Activated CD4-positive, alpha-beta T cell treated with anti-CD3 and anti-CD28 coated beads for 36 hours (primary cell): ENCODE measurements at regions of chr21 and their contacts with region 1.

Region 1: DNA sequence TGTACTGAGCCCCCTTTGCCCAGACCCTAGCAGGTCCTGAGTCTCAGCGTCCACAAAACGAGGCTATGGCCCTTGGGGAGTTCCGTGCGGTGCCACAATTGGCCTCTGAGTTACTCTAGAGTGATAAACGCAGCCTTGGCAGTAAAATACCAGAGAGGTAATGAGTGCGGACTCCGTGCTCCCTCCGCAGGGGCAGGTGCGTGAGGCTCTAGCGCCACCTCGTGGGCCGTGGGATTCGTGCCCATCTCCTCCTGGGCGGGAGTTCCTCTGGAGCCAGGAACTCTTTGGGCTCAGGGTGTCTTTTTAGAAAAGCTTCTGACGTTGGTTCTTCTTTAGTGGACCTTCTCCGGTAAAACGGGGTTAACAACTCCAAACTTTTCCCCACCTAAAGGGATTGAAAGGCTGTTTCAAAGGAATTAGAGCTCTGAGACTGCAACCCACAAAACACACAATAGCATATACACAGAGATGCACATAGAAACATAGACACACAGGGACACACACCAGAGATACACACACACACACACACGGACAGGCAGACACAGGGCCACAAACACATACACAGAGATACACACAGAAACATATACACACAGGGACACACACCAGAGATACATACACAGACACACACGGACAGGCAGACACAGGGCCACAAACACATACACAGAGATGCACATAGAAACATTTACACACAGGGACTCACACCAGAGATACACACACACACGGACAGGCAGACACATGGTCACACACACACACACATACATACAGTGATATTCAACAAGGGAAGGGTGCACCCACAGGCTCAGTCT is 99.4 kb downstream of the KCNJ15 start:
- DNase-seq: peak; percentile 88
- ATAC-seq: peak; percentile 78
- H3K4me3 Mint-ChIP-seq: no peak overlapping the region
- H3K27ac Mint-ChIP-seq: no peak overlapping the region
- H3K4me1 Mint-ChIP-seq: peaks cover 13% of the 10 kb centered on the region
- H3K27me3 Mint-ChIP-seq: peaks cover 5% of the 10 kb centered on the region

Region 2: DNA sequence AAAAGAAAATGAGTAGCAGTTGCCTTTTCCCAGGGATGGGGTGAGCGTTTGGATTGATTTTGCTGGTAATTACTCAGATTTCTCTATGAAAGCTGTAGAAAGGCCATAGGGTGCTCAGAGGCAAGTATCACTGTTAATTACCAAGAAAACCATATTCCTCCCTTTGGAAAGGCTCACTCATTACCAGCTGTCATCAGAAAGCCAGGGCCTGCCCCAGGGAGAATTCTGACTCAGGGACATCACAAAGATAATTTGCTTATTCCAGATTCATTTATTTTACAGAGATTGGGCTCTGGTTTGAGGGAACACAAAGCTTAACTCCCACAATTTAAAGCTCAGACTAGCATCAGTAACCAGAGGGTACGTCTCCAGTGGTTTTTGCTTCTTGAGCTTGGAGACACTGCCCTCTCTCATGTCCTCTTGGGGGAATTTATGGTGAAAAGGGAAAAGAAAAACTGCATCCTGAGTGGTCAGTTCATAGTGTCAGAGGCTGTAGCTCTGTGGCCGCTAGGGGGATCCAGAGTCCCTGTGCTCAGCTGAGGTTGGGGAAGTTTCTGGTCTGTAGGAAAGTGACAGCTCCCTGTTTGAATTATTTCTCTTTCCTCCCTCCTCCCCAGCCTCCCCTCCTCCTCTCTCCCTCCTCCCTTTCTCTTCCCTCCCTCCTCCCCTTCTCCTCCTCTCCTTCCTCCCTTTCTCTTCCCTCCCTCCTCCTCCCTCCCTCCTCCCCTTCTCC is 644.2 kb before region 1 on chr21:
- CTCF ChIA-PET with region 1: interaction called, 4 read pairs
- POLR2A ChIA-PET with region 1: no interaction called
- intact Hi-C with region 1: loop called (anchors 1 to 5 kb)
- DNase-seq: peak; percentile 78
- ATAC-seq: peak; percentile 53
- H3K4me3 Mint-ChIP-seq: no peak overlapping the region
- H3K27ac Mint-ChIP-seq: no peak overlapping the region
- H3K4me1 Mint-ChIP-seq: no peaks in the 10 kb centered on the region
- H3K27me3 Mint-ChIP-seq: peaks cover 14% of the 10 kb centered on the region

Region 3: GRCh38 chr21:38159355-38159754 is 196.8 kb before region 1 on chr21:
- CTCF ChIA-PET with region 1: interaction called, 52 read pairs
- POLR2A ChIA-PET with region 1: no interaction called
- intact Hi-C with region 1: loop called (anchors 1 kb)
- DNase-seq: peak; percentile 78
- ATAC-seq: no peak
- H3K4me3 Mint-ChIP-seq: no peak overlapping the region
- H3K27ac Mint-ChIP-seq: no peak overlapping the region
- H3K4me1 Mint-ChIP-seq: no peaks in the 10 kb centered on the region
- H3K27me3 Mint-ChIP-seq: peaks cover 15% of the 10 kb centered on the region

Region 4: GRCh38 chr21:38205940-38206339 is 150.3 kb before region 1 on chr21:
- CTCF ChIA-PET with region 1: interaction called, 15 read pairs
- POLR2A ChIA-PET with region 1: no interaction called
- intact Hi-C with region 1: no loop called
- DNase-seq: no peak
- ATAC-seq: no peak
- H3K4me3 Mint-ChIP-seq: no peak overlapping the region
- H3K27ac Mint-ChIP-seq: no peak overlapping the region
- H3K4me1 Mint-ChIP-seq: peaks cover 3% of the 10 kb centered on the region
- H3K27me3 Mint-ChIP-seq: peaks cover 18% of the 10 kb centered on the region

Region 5: DNA sequence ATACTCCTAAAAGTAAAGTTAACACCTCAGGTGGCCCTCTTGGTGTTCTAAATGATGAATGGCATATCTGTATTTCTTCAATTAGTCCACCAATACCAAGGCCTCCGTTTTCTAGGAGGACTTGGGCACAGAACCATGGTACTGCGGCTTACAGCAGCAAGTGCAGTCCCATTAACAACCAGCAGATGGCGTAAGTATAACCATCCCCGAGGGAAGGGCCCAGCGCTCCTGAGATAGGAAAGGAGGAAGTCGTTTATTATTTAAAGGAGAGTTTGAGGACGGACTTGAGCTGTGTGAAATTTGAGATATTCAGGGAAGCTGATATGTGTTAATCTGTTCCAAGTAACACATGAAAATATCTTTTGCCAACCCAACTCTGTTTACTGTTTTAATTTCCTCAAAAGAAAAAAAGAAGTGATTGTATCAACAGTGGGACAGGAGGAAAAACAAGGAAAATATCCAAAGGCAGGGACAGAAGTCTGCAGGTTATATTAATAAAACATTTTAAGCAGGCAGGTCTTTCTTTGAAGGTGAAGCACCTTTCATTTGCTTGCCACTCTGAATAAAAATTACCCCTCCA is 137.1 kb before region 1 on chr21:
- CTCF ChIA-PET with region 1: interaction called, 154 read pairs
- POLR2A ChIA-PET with region 1: no interaction called
- intact Hi-C with region 1: loop called (anchors 1 kb)
- DNase-seq: peak; percentile 76
- ATAC-seq: peak; percentile 78
- H3K4me3 Mint-ChIP-seq: no peak overlapping the region
- H3K27ac Mint-ChIP-seq: no peak overlapping the region
- H3K4me1 Mint-ChIP-seq: peaks cover 8% of the 10 kb centered on the region
- H3K27me3 Mint-ChIP-seq: peaks cover 4% of the 10 kb centered on the region

Region 6: DNA sequence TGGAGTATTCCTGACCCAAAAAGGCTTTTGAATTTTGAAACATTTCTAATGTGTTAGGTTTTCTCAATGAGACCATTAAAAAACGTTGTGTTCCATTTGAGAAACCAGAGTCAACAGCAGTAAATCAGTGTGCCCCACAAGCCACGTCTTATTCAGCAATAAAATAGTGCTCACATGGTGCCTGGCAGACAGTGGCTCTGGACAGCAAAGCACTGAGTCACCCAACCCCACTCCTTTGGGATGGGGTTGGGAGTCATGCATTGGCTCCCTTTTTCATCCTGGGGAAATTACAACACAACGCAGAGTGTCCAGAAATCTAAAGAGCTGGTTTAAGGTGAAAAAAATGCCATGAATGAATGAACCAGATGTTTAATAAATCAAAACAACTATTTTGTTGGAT is 52.9 kb before region 1 on chr21:
- CTCF ChIA-PET with region 1: interaction called, 10 read pairs
- POLR2A ChIA-PET with region 1: no interaction called
- intact Hi-C with region 1: no loop called
- DNase-seq: no peak
- ATAC-seq: no peak
- H3K4me3 Mint-ChIP-seq: no peak overlapping the region
- H3K27ac Mint-ChIP-seq: no peak overlapping the region
- H3K4me1 Mint-ChIP-seq: peaks cover 45% of the 10 kb centered on the region
- H3K27me3 Mint-ChIP-seq: peaks cover 3% of the 10 kb centered on the region

Region 7: DNA sequence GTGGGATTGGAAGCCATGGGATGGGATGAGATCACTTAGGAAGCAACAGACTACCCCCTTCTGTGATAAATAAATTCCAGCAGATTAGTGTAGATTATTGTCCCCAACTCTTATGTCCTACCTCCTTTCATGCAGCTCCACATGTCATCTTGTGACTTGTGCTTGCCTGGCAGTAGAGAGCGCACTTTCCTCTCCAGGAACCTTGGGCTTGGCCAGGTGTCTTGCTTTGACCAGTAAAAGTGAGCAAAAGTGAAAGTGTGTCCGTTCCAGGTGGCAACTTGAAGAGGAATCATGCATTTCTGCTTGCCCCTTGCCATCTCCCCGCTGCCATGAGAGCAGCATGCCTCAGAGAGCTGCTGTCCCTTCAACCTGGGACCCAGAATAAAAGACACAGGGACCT is 264.9 kb after region 1 on chr21:
- CTCF ChIA-PET with region 1: no interaction called
- POLR2A ChIA-PET with region 1: no interaction called
- intact Hi-C with region 1: no loop called
- DNase-seq: no peak
- ATAC-seq: no peak
- H3K4me3 Mint-ChIP-seq: no peak overlapping the region
- H3K27ac Mint-ChIP-seq: no peak overlapping the region
- H3K4me1 Mint-ChIP-seq: no peaks in the 10 kb centered on the region
- H3K27me3 Mint-ChIP-seq: no peaks in the 10 kb centered on the region

Region 8: DNA sequence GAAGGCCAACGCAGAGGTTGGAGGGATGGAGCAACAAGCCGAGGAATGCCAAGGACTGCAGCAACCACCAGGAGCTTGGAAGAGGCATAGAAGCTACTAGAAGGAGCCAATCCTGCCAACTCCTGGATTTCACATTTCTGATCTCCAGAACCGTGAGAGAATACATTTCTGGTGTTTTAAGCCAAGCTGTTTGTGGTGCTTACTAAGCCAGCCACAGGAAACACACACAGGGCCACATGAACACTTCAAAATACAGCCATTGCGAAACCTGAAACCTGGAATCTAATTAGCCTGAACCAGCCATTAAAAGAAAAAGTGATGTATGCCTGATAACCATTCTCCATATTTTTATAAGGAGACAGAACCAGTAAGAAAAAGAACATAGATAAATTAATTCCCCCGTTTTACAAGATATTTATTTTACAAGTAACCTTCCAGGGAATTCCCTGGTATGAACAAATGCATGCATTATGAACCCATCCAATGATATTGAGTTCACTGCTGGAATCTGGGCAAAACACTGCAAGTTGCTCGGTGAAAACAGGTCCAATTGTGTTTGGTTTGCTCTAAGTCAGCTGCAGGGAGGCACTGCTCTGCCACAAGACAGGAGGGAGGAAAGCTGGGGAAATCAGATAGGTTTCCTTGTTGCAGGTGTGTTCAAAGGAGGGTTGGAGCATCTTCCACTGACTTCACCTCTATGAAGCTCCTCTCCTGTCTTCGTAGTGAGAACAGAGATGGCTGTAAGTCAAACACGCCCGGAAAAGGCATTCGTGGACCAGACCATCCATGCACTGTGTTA is 519.7 kb after region 1 on chr21:
- CTCF ChIA-PET with region 1: no interaction called
- POLR2A ChIA-PET with region 1: no interaction called
- intact Hi-C with region 1: no loop called
- DNase-seq: no peak
- ATAC-seq: no peak
- H3K4me3 Mint-ChIP-seq: no peak overlapping the region
- H3K27ac Mint-ChIP-seq: no peak overlapping the region
- H3K4me1 Mint-ChIP-seq: no peaks in the 10 kb centered on the region
- H3K27me3 Mint-ChIP-seq: no peaks in the 10 kb centered on the region